ENCODE measurements at regions of chr11 and their contacts with region 1.

Region 1: DNA sequence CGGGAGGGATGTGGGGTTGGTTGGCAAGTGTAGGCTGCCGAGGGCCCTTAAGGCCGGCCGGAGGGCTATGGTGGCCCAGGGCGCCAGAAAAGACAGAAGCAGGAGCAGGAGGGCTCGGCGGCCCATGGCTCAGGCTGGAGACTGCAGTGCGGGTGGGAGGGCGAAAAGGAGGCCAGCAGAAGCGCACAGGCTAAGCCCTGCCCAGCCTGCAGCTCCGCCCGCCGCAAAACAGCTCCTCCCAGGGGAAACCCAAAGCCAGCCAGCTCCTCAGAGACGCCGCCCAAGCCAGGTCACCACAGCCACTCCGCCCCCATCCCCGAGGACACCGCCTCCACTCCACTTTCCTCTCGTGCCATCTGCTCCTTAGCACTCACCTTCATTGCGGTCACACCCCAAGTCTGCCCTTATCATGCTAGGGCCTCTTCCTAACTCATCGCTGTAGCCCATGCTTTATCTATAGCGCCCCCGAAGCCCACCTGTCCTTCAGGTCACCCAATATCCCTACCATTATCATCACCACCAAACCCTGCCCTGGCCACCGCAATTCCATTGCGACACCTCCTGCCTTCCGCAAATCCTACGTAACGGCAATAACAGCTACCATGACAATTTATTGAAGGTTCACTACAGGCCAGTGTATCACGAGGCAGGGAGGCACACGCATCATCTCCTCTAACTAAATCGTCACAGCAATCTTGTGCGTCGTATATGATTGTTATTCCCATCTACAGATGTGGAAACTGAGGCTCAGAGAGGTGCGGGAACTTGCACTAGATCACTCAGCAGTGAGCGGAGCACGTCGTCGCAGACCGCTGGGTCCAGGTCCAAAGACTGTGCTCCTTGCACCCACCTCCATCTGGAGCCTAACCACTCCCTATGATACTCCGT is at the start of gene PRCP:
- DNase-seq: peak; percentile 63 to 95 (median 88)
- H3K4me3 ChIP-seq: peak within 1 kb of the TSS; percentile 58 to 89 (median 78)
- H3K27ac ChIP-seq: peak within 1 kb of the TSS; percentile 7 to 95 (median 88)
- H3K27me3 ChIP-seq: no peaks in the 10 kb centered on the region
- CTCF ChIP-seq: peak in 28 of 56 donors; percentile 3 to 43 (median 25)
- total RNA-seq, gene PRCP: 38.4 to 137 (median 59.7) TPM

Region 2: GRCh38 chr11:82867495-82868082 is 32.9 kb before region 1 on chr11:
- intact Hi-C with region 1: loop called (anchors 1 kb)
- DNase-seq: peak in 5 of 10 donors; percentile 49 to 88 (median 69)
- H3K4me3 ChIP-seq: peak overlapping the region in 30 of 59 donors; percentile 2 to 46 (median 28)
- H3K27ac ChIP-seq: peak overlapping the region in 32 of 59 donors; percentile 2 to 68 (median 38)
- H3K27me3 ChIP-seq: no peaks in the 10 kb centered on the region
- CTCF ChIP-seq: peak; percentile 71 to 93 (median 84)

Region 3: DNA sequence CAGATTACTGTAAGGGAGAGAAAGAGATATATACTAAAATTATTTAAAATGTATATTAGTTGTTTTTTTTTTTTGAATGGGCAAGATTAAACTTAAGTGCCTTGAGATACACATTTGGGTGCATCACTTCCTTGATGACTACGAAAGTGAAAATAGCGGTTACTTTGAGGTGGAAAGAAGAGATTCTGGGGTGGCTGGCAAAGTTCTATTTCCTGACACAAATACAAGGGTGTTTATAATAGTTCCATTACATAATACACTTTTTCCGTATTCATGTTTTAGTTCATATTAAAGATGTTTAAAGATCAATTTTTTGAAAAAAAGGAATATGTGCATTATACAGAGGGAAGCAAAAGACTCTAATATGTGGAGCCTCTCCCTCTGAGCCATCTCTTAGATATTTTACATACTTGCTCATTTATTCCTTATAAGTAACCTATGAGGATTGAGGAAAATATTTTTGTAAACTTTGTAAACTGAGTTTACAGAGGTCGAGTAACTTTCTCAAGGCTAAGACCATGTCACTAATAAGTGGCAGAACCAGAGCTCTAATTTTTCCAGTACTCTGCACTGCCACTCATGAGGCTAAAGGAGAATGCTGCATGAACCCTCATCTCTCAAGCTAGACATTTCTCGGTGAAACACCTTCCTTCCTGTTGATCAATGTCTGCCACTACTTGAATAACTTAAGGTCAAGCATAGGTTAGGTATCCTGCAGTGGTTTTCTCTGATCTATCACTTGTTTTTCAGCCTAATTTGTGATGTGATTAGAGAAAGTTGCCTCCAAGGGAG is 59.7 kb after region 1 on chr11:
- intact Hi-C with region 1: no loop called
- DNase-seq: no peak
- H3K4me3 ChIP-seq: no peak overlapping the region
- H3K27ac ChIP-seq: no peak overlapping the region
- H3K27me3 ChIP-seq: no peaks in the 10 kb centered on the region
- CTCF ChIP-seq: no peak

Region 4: GRCh38 chr11:83156150-83156995 is 255.9 kb after region 1 on chr11:
- intact Hi-C with region 1: loop called (anchors 2 to 5 kb)
- DNase-seq: peak in 5 of 10 donors; percentile 96 to 100 (median 99)
- H3K4me3 ChIP-seq: peak overlapping the region; percentile 48 to 100 (median 94)
- H3K27ac ChIP-seq: peak overlapping the region; percentile 35 to 100 (median 96)
- H3K27me3 ChIP-seq: no peaks in the 10 kb centered on the region
- CTCF ChIP-seq: peak in 11 of 56 donors; percentile 3 to 26 (median 11)

Region 5: GRCh38 chr11:83193315-83194280 is 293.1 kb after region 1 on chr11 and contains the start of gene ANKRD42:
- intact Hi-C with region 1: loop called (anchors 2 to 10 kb)
- DNase-seq: peak; percentile 90 to 97 (median 94)
- H3K4me3 ChIP-seq: peak within 1 kb of the TSS; percentile 63 to 100 (median 92)
- H3K27ac ChIP-seq: peak within 1 kb of the TSS in 58 of 59 donors; percentile 10 to 95 (median 83)
- H3K27me3 ChIP-seq: no peaks in the 10 kb centered on the region
- CTCF ChIP-seq: peak in 22 of 56 donors; percentile 1 to 51 (median 21)
- total RNA-seq, gene ANKRD42: 9.9 to 46.5 (median 32.4) TPM

Region 6: GRCh38 chr11:83249972-83250593 is 349.6 kb after region 1 on chr11:
- intact Hi-C with region 1: loop called (anchors 5 kb)
- DNase-seq: no peak
- H3K4me3 ChIP-seq: peak overlapping the region in 3 of 59 donors; percentile 7 to 15 (median 11)
- H3K27ac ChIP-seq: no peak overlapping the region
- H3K27me3 ChIP-seq: no peaks in the 10 kb centered on the region
- CTCF ChIP-seq: peak; percentile 47 to 88 (median 76)

Region 7: DNA sequence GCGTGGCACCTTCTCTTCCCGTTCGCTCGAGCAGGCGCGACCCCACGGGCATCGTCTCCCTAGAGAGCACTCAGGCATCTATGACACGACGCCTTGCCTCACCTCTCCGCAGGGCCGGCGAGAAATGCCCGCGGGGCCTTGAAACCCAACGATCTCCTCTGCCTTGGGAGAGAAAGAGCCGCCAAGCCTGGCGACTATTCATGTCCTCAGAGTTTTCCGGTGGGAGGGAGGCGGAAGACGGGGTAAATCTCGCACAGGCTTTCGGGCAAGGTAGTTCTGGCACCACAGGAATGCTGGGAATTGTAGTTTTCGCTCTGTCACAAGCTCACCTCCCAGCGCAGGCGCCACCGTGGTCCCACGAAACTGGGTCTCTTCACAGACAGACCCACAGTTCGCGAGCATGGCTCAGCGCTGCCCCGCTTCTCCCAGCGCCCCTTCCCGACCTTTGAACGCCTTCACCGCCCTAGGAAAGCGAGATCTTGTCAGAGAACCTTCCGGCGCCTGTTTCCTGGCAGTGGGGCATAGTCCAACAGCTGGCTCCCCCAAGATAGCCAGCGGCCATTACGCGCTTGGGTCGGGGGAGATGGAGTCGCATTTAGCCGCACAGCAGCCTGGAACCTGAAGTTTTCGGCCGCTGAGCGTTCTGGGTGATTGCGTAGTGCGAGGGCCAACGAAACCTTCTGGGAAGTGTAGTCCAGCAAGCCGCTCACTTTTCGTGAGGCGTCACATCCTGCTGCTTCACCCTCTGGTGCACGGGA is 385.4 kb after region 1 on chr11 and contains the start of gene CCDC90B:
- intact Hi-C with region 1: loop called (anchors 1 to 5 kb)
- DNase-seq: peak; percentile 94 to 99 (median 97)
- H3K4me3 ChIP-seq: peak within 1 kb of the TSS; percentile 66 to 100 (median 93)
- H3K27ac ChIP-seq: peak within 1 kb of the TSS; percentile 89 to 100 (median 99)
- H3K27me3 ChIP-seq: no peaks in the 10 kb centered on the region
- CTCF ChIP-seq: peak in 46 of 56 donors; percentile 22 to 78 (median 58)
- total RNA-seq, gene CCDC90B: 25.8 to 63.1 (median 35.8) TPM

Measured in dorsolateral prefrontal cortex (tissue), 120 donors.